Pancreas (tissue), 10 donors: ENCODE measurements at regions of chr1 and their contacts with region 1.

Region 1: DNA sequence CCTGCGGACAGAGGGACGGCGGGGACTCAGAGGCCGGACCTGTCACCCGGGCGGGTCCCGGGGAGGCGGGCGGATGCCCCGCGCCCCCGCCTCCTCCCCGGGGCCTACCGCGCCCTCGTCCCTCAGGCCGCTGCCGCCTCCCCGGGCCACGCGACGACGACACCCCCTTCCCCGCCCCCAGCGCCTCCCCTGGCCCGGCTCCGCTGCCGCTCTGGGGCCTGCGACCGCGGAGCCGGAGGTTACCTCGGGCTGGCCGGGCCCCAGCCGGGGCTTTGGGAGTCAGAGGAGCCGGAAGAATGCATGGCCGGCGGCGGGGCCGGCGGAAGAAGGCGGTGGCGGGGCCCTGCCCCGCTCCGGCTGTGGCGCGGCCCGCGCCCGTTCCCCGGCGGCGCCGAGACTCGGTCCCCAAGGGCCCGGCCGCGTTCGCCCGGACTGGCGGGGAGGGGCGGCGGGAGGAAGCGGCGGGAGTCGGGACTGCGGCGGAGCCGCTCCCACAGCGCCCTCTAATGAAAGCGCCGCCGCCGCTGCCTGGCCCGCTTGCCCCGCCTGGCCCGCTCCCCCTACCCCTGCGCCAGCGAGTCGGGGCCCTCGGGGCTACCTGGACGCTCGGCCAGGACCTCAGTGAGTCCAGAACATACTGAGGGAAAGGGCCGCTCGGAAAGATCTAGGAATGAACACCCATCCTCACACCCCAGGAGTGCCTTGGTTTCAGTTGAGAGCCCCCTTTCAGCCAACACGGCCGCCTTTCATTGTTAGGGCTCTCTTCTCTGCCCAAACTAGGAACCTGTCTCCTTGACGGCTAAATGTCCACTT is at the start of gene LPGAT1:
- DNase-seq: peak; percentile 78 to 95 (median 84)
- ATAC-seq: peak; percentile 94 to 97 (median 96)
- H3K4me3 ChIP-seq: peak within 1 kb of the TSS; percentile 46 to 87 (median 70)
- H3K27ac ChIP-seq: peak within 1 kb of the TSS; percentile 68 to 93 (median 82)
- H3K4me1 ChIP-seq: peaks cover 0 to 16% (median 0%) of the 10 kb centered on the region in 3 donors
- H3K27me3 ChIP-seq: no peaks in the 10 kb centered on the region
- CTCF ChIP-seq: peak; percentile 30 to 51 (median 44)
- total RNA-seq, gene LPGAT1: 20.7 to 49.7 (median 25.7) TPM

Region 2: GRCh38 chr1:211698161-211699026 is 132.1 kb before region 1 on chr1:
- intact Hi-C with region 1: loop called in 2 of 3 experiments (anchors 5 to 10 kb)
- DNase-seq: peak; percentile 79 to 98 (median 87)
- ATAC-seq: peak; percentile 95 to 100 (median 99)
- H3K4me3 ChIP-seq: peak overlapping the region in 1 of 4 donors; percentile 26
- H3K27ac ChIP-seq: no peak overlapping the region
- H3K4me1 ChIP-seq: no peaks in the 10 kb centered on the region
- H3K27me3 ChIP-seq: no peaks in the 10 kb centered on the region
- CTCF ChIP-seq: peak; percentile 93 to 97 (median 96)

Region 3: GRCh38 chr1:211705467-211706091 is 125.0 kb before region 1 on chr1:
- intact Hi-C with region 1: loop called in 1 of 3 experiments (anchors 10 kb)
- DNase-seq: no peak
- ATAC-seq: no peak
- H3K4me3 ChIP-seq: no peak overlapping the region
- H3K27ac ChIP-seq: no peak overlapping the region
- H3K4me1 ChIP-seq: no peaks in the 10 kb centered on the region
- H3K27me3 ChIP-seq: no peaks in the 10 kb centered on the region
- CTCF ChIP-seq: no peak

Region 4: GRCh38 chr1:211935448-211935970 is 105.0 kb after region 1 on chr1:
- intact Hi-C with region 1: loop called in 1 of 3 experiments (anchors 10 kb)
- DNase-seq: no peak
- ATAC-seq: no peak
- H3K4me3 ChIP-seq: no peak overlapping the region
- H3K27ac ChIP-seq: no peak overlapping the region
- H3K4me1 ChIP-seq: peaks cover 0 to 11% (median 0%) of the 10 kb centered on the region in 3 donors
- H3K27me3 ChIP-seq: no peaks in the 10 kb centered on the region
- CTCF ChIP-seq: no peak